ENCODE measurements at regions of chr4 and their contacts with region 1.

Region 1: GRCh38 chr4:127370604-127371003 is 262.2 kb upstream of the INTU start:
- DNase-seq: peak; percentile 13
- H3K4me3 ChIP-seq: no peak overlapping the region
- H3K27ac ChIP-seq: no peak overlapping the region
- H3K4me1 ChIP-seq: no peaks in the 10 kb centered on the region
- H3K27me3 ChIP-seq: no peaks in the 10 kb centered on the region
- CTCF ChIP-seq: no peak
- EP300 ChIP-seq: no peak
- POLR2A ChIP-seq: no peak

Region 2: GRCh38 chr4:127352220-127353113 is 18.1 kb before region 1 on chr4:
- in situ Hi-C with region 1: no loop called
- intact Hi-C with region 1: loop called (anchors 1 kb)
- DNase-seq: no peak
- H3K4me3 ChIP-seq: no peak overlapping the region
- H3K27ac ChIP-seq: no peak overlapping the region
- H3K4me1 ChIP-seq: no peaks in the 10 kb centered on the region
- H3K27me3 ChIP-seq: no peaks in the 10 kb centered on the region
- CTCF ChIP-seq: no peak
- EP300 ChIP-seq: no peak
- POLR2A ChIP-seq: no peak

Region 3: GRCh38 chr4:127357765-127358164 is 12.8 kb before region 1 on chr4:
- in situ Hi-C with region 1: no loop called
- intact Hi-C with region 1: loop called (anchors 1 kb)
- DNase-seq: no peak
- H3K4me3 ChIP-seq: no peak overlapping the region
- H3K27ac ChIP-seq: no peak overlapping the region
- H3K4me1 ChIP-seq: no peaks in the 10 kb centered on the region
- H3K27me3 ChIP-seq: no peaks in the 10 kb centered on the region
- CTCF ChIP-seq: no peak
- EP300 ChIP-seq: no peak
- POLR2A ChIP-seq: no peak

Region 4: GRCh38 chr4:127469959-127470809 is 99.6 kb after region 1 on chr4:
- in situ Hi-C with region 1: loop called in 1 of 4 experiments (anchors 25 kb)
- intact Hi-C with region 1: no loop called
- DNase-seq: no peak
- H3K4me3 ChIP-seq: no peak overlapping the region
- H3K27ac ChIP-seq: no peak overlapping the region
- H3K4me1 ChIP-seq: no peaks in the 10 kb centered on the region
- H3K27me3 ChIP-seq: no peaks in the 10 kb centered on the region
- CTCF ChIP-seq: no peak
- EP300 ChIP-seq: no peak
- POLR2A ChIP-seq: no peak